ENCODE measurements at regions of chr4 and their contacts with region 1.

Region 1: GRCh38 chr4:31674313-31674947 is 954.3 kb downstream of the PCDH7 start:
- DNase-seq: no peak
- H3K4me3 ChIP-seq: no peak overlapping the region
- CTCF ChIP-seq: no peak
- POLR2A ChIP-seq: no peak

Region 2: GRCh38 chr4:30714408-30715027 is 959.9 kb before region 1 on chr4:
- intact Hi-C with region 1: loop called (anchors 10 kb)
- DNase-seq: no peak
- H3K4me3 ChIP-seq: no peak overlapping the region
- CTCF ChIP-seq: no peak
- POLR2A ChIP-seq: no peak

Region 3: DNA sequence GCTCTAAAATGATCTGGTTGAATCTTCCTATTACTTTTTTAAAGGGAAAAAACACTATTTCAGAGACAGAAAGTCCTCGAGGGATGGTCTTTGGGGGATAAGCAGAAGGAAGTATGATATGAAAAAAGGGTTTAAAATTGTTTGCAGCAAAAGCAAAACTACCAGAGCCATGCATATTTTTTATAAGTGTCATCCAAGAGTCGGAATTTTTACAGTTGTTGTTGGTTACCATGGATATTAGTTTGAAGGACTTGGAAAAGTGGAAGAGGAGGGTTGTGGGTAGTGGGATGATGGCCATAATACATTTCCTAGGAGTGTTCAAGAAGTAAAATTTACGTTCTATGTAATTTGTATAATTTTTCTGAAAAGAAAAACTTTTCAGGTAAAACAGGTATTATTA is 819.9 kb before region 1 on chr4:
- intact Hi-C with region 1: no loop called
- DNase-seq: no peak
- H3K4me3 ChIP-seq: no peak overlapping the region
- CTCF ChIP-seq: no peak
- POLR2A ChIP-seq: no peak

Region 4: GRCh38 chr4:31613946-31614623 is 60.3 kb before region 1 on chr4:
- intact Hi-C with region 1: no loop called
- DNase-seq: no peak
- H3K4me3 ChIP-seq: no peak overlapping the region
- CTCF ChIP-seq: no peak
- POLR2A ChIP-seq: no peak

Region 5: DNA sequence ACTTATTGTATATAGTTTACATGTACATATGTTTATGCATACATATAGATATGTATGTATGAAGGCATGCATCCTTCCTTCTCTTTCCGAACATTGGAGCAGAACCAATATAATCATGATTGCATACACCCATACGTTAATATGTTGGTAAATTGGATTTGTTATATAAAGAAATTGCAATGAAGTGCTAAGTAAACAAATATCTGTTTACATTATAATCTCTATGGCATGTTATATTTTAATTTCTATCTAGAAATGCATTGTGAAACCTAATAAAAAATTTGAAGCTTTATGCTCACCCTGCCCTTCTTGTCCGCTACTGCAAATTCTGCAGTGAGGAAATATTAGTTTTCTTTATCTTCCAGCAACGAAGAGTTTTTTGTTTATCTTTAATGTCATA is 731.4 kb after region 1 on chr4:
- intact Hi-C with region 1: no loop called
- DNase-seq: no peak
- H3K4me3 ChIP-seq: no peak overlapping the region
- CTCF ChIP-seq: no peak
- POLR2A ChIP-seq: no peak